HCT116 (cell line): ENCODE measurements at regions of chr4 and their contacts with region 1.

Region 1: GRCh38 chr4:150297861-150298474 is 219.7 kb downstream of the DCLK2 start:
- DNase-seq: peak; percentile 45
- ATAC-seq: peak; percentile 54
- H3K4me3 ChIP-seq: no peak overlapping the region
- H3K27ac ChIP-seq: no peak overlapping the region
- H3K4me1 ChIP-seq: peaks cover 0 to 5% of the 10 kb centered on the region in 2 experiments; a peak in 1 of 4 replicates
- H3K27me3 ChIP-seq: no peaks in the 10 kb centered on the region
- CTCF ChIP-seq: peak; percentile 52 to 81 (median 68); a peak in 5 of 6 replicates
- POLR2A ChIP-seq: no peak
- RAD21 ChIP-seq: peak; percentile 83

Region 2: DNA sequence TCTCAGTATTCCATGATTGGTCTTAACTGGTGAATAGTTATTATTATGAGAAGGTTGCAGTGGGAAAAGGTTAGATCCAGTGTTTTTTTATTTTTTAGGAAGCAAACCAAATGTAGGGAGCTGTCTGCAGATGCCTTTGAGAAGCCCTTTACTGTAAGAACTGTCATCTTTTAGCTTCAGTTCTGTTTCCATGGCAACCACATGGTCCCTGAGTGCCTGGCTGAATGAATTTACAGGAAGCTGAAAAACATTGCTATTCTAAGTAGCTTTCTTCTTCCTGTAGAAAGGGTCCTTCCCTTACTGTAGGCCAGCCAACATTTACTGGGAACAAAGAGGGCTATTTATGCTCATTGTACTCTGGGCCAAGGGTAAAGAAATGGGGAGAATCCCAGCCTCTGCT is 116.4 kb before region 1 on chr4:
- CTCF ChIA-PET with region 1: no interaction called
- POLR2A ChIA-PET with region 1: no interaction called
- RAD21 ChIA-PET with region 1: no interaction called
- intact Hi-C with region 1: no loop called
- DNase-seq: no peak
- ATAC-seq: no peak
- H3K4me3 ChIP-seq: no peak overlapping the region
- H3K27ac ChIP-seq: no peak overlapping the region
- H3K4me1 ChIP-seq: no peaks in the 10 kb centered on the region
- H3K27me3 ChIP-seq: no peaks in the 10 kb centered on the region
- CTCF ChIP-seq: no peak
- POLR2A ChIP-seq: no peak
- RAD21 ChIP-seq: no peak

Region 3: DNA sequence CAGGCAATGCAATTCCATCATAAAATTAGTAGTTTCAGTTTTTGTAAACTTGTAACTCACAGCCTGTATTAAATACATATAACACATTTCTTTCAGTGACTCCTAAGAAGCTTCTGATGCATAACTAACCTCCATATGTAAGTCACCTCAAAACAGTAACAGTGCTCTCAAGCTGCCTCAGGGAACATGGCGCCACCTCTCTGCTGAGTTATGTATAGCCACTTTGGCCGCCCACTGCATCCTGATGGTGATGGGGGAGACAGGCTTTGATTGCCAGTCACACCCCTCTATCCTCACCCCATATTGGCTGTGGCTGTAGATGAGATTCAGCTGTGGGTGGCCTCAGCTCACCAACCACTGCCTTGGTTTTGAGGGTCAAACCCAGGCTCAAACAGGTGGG is 662.9 kb after region 1 on chr4:
- CTCF ChIA-PET with region 1: no interaction called
- POLR2A ChIA-PET with region 1: no interaction called
- RAD21 ChIA-PET with region 1: no interaction called
- intact Hi-C with region 1: loop called (anchors 5 kb)
- DNase-seq: no peak
- ATAC-seq: peak; percentile 92
- H3K4me3 ChIP-seq: no peak overlapping the region
- H3K27ac ChIP-seq: no peak overlapping the region
- H3K4me1 ChIP-seq: no peaks in the 10 kb centered on the region
- H3K27me3 ChIP-seq: no peaks in the 10 kb centered on the region
- CTCF ChIP-seq: peak; percentile 5 to 73 (median 67); a peak in 4 of 6 replicates
- POLR2A ChIP-seq: no peak
- RAD21 ChIP-seq: peak; percentile 21; the same call in 1 of the 2 replicates

Region 4: GRCh38 chr4:151045907-151046306 is 747.9 kb after region 1 on chr4:
- CTCF ChIA-PET with region 1: no interaction called
- POLR2A ChIA-PET with region 1: no interaction called
- RAD21 ChIA-PET with region 1: no interaction called
- intact Hi-C with region 1: loop called (anchors 2 kb)
- DNase-seq: peak; percentile 21
- ATAC-seq: peak; percentile 95
- H3K4me3 ChIP-seq: no peak overlapping the region
- H3K27ac ChIP-seq: no peak overlapping the region
- H3K4me1 ChIP-seq: no peaks in the 10 kb centered on the region
- H3K27me3 ChIP-seq: no peaks in the 10 kb centered on the region
- CTCF ChIP-seq: peak; percentile 39 to 58 (median 42); a peak in 5 of 6 replicates
- POLR2A ChIP-seq: no peak
- RAD21 ChIP-seq: peak; percentile 73